Mammary epithelial cell (primary cell): ENCODE measurements at regions of chr13 and their contacts with region 1.

Region 1: GRCh38 chr13:41960639-41961465 is at the start of gene VWA8:
- DNase-seq: peak; percentile 84
- H3K4me3 ChIP-seq: peak within 1 kb of the TSS; percentile 82 to 88 (median 84)
- H3K27ac ChIP-seq: peak within 1 kb of the TSS; percentile 82
- H3K4me1 ChIP-seq: peaks cover 27% of the 10 kb centered on the region
- H3K27me3 ChIP-seq: no peaks in the 10 kb centered on the region
- CTCF ChIP-seq: no peak
- total RNA-seq, gene VWA8: 24.1 to 32.0 TPM

Region 2: GRCh38 chr13:41905600-41906254 is 55.1 kb before region 1 on chr13:
- CTCF ChIA-PET with region 1: no interaction called
- dilution Hi-C with region 1: no loop called
- in situ Hi-C with region 1: no loop called
- intact Hi-C with region 1: loop called (anchors 2 kb)
- DNase-seq: peak; percentile 45
- H3K4me3 ChIP-seq: no peak overlapping the region
- H3K27ac ChIP-seq: no peak overlapping the region
- H3K4me1 ChIP-seq: peaks cover 10% of the 10 kb centered on the region
- H3K27me3 ChIP-seq: no peaks in the 10 kb centered on the region
- CTCF ChIP-seq: peak; percentile 74 to 79

Region 3: GRCh38 chr13:41916173-41916954 is 44.5 kb before region 1 on chr13:
- CTCF ChIA-PET with region 1: no interaction called
- dilution Hi-C with region 1: no loop called
- in situ Hi-C with region 1: no loop called
- intact Hi-C with region 1: loop called (anchors 2 kb)
- DNase-seq: peak; percentile 82
- H3K4me3 ChIP-seq: peak overlapping the region in 2 of 3 experiments; percentile 23 to 26
- H3K27ac ChIP-seq: peak overlapping the region; percentile 57
- H3K4me1 ChIP-seq: peaks cover 33% of the 10 kb centered on the region
- H3K27me3 ChIP-seq: no peaks in the 10 kb centered on the region
- CTCF ChIP-seq: no peak

Region 4: GRCh38 chr13:42028113-42028799 is 67.4 kb after region 1 on chr13:
- CTCF ChIA-PET with region 1: no interaction called
- dilution Hi-C with region 1: no loop called
- in situ Hi-C with region 1: no loop called
- intact Hi-C with region 1: loop called (anchors 1 kb)
- DNase-seq: no peak
- H3K4me3 ChIP-seq: no peak overlapping the region
- H3K27ac ChIP-seq: no peak overlapping the region
- H3K4me1 ChIP-seq: peaks cover 37% of the 10 kb centered on the region
- H3K27me3 ChIP-seq: no peaks in the 10 kb centered on the region
- CTCF ChIP-seq: no peak

Region 5: GRCh38 chr13:42039946-42040729 is 79.3 kb after region 1 on chr13:
- CTCF ChIA-PET with region 1: no interaction called
- dilution Hi-C with region 1: loop called (anchors 5 kb)
- in situ Hi-C with region 1: loop called in 1 of 2 experiments (anchors 5 kb)
- intact Hi-C with region 1: loop called (anchors 1 kb)
- DNase-seq: peak; percentile 81
- H3K4me3 ChIP-seq: peak overlapping the region; percentile 45 to 92 (median 67)
- H3K27ac ChIP-seq: peak overlapping the region; percentile 63
- H3K4me1 ChIP-seq: peaks cover 14% of the 10 kb centered on the region
- H3K27me3 ChIP-seq: no peaks in the 10 kb centered on the region
- CTCF ChIP-seq: peak in 1 of 2 donors; percentile 16

Region 6: DNA sequence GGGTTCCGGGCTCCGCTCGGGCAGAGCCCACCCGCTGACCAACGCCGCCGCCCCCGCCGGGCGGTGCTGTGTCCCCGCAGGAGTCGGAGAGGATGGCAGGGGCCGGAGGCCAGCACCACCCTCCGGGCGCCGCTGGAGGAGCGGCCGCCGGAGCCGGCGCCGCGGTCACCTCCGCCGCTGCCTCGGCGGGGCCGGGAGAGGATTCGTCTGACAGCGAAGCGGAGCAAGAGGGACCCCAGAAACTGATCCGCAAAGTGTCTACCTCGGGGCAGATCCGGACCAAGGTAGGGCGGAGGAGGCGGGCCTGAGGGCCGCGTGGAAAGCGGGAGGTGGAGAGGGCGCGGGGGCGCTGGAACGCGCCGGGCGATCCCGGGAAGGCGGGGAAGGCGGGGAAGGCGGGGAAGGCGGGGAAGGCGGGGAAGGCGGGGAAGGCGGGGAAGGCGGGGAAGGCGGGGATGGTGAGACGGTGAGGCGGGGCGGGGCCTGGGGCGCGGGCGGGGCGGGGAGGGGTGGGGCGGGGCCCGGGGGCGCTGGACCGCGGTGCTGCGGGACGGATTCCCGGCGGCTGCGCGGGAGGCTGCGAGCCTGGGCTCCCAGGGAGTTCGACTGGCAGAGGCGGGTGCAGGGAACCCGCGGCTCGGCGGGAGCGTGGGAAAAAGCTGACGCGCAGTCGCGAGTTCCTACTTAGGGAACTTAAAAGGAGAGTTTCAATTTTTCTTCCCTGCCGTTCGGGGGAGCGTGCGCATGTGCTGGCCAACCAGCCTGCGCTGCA is 88.0 kb after region 1 on chr13:
- CTCF ChIA-PET with region 1: no interaction called
- dilution Hi-C with region 1: loop called (anchors 5 kb)
- in situ Hi-C with region 1: loop called in 1 of 2 experiments (anchors 5 kb)
- intact Hi-C with region 1: loop called (anchors 1 kb)
- DNase-seq: peak; percentile 80
- H3K4me3 ChIP-seq: peak overlapping the region; percentile 65 to 85 (median 85)
- H3K27ac ChIP-seq: peak overlapping the region; percentile 86
- H3K4me1 ChIP-seq: peaks cover 9% of the 10 kb centered on the region
- H3K27me3 ChIP-seq: no peaks in the 10 kb centered on the region
- CTCF ChIP-seq: peak in 1 of 2 donors; percentile 20